Mucosa of descending colon (tissue), 3 donors: ENCODE measurements at regions of chr2 and their contacts with region 1.

Region 1: GRCh38 chr2:70616168-70616694 is 62.6 kb upstream of the TGFA start:
- DNase-seq: peak in 2 of 3 donors; percentile 40 to 56
- ATAC-seq: peak; percentile 95
- H3K4me3 ChIP-seq: no peak overlapping the region
- H3K4me1 ChIP-seq: peaks cover 3% of the 10 kb centered on the region
- CTCF ChIP-seq: no peak

Region 2: DNA sequence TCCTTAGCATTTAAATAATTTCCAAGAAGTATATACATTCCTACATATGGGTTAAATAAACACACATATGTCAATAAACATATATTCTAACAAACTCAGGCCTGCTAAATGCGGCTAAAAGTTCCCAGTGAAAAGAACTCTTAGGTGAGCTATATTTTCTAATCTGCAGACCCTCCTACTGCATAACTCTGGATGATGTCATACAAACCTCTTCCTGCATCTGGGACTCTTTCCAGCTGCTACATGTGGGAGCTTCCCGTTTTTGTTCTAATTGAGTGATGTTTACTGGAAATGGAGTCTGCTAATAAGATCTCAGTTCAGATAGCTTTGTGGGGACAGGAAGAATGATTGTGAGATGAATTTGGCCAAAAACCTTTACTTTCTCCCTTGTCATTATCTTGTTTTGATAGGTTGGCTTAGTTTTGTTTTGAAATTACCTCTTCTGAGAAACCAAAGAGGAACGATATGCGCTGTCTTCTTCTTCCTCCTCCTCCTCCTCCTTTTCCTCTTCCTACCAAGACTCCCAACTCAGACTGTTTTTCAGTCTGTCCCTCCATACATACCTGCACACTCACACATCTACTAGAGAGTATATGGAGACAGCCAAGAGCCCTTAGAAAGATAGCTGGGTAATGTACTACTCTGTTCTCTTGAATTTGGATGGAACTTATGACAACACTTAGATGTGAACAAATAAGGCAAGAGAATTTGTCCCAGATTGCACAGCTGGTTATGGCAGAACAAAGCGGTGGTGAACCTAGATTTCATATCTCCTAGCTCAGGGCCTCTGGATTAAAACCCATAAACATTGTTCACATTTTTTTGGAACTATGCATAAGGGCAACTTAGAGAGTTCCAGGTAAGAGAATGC is 932.9 kb before region 1 on chr2:
- intact Hi-C with region 1: no loop called
- DNase-seq: no peak
- ATAC-seq: no peak
- H3K4me3 ChIP-seq: no peak overlapping the region
- H3K4me1 ChIP-seq: no peaks in the 10 kb centered on the region
- CTCF ChIP-seq: no peak

Region 3: GRCh38 chr2:70340921-70341765 is 275.1 kb before region 1 on chr2:
- intact Hi-C with region 1: loop called (anchors 2 to 5 kb)
- DNase-seq: peak in 1 of 3 donors; percentile 47
- ATAC-seq: peak; percentile 94
- H3K4me3 ChIP-seq: no peak overlapping the region
- H3K4me1 ChIP-seq: no peaks in the 10 kb centered on the region
- CTCF ChIP-seq: peak; percentile 66

Region 4: DNA sequence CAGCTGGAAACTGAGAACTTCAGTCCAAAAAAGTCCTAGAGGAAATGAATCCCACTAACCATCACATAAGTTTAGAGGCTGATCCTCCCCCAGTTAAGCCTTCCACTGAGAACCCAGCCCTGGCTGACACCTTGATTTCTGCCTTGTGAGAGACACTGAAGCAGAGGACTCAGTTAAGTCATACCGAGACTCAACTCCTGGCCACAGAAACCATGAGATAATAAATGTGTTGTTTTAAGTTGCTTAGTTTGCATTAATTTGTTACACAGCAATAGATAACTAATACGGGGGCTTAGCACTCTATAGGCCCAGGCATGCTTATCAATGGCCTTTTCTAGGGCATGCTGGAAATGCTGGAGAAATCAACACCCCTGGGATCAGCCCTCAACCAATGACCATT is 155.2 kb after region 1 on chr2:
- intact Hi-C with region 1: no loop called
- DNase-seq: no peak
- ATAC-seq: no peak
- H3K4me3 ChIP-seq: no peak overlapping the region
- H3K4me1 ChIP-seq: peaks cover 11% of the 10 kb centered on the region
- CTCF ChIP-seq: no peak

Region 5: DNA sequence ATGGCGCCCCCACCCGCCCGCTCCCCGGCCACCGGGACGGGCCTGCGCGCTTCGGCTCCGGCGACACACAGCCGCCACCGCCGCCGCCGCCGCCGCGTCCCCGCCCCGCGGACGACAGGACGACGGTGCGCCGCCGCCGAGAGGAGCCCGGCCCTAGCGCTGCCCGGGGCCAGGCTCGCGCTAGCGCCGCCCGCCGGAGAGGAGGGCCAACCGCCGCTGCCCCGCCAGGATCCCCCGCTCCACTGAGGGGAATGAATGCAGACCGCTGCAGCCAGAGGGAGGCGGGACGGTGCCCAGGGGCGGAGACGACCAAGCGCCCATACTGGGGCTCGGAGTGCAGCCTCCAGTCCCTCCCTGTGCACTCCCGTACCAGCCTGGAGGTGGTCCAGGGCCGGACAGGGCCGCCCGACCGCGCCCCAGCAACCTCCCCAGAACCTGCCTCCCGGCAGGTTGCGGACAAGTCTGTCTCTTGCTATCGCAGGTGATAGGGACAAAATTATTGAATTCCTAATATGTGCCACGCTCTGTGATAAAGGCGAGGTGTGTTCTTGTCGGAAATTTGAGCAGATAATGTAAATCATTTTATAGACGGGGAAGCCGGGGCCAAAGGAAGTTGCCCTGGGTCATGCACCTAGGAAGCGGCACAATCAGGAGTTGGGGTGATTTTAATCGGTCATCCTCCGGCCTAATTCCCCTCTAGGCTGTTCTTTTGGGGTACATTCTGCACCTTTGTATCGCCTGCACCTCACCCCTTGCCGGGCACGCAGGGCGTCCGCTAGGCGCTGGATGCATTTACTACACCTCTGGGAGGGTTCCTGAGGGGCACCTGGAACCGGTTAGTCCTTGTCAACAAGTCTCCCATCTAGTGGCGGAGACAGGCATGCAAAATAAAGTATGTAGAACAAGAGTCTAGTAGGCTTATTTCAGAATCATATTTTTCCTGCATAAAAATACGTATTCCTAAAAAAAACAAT is 378.8 kb after region 1 on chr2 and contains the start of gene TEX261:
- intact Hi-C with region 1: no loop called
- DNase-seq: peak; percentile 89 to 94 (median 93)
- ATAC-seq: peak; percentile 99
- H3K4me3 ChIP-seq: peak within 1 kb of the TSS; percentile 98
- H3K4me1 ChIP-seq: peaks cover 21% of the 10 kb centered on the region
- CTCF ChIP-seq: peak; percentile 83
- total RNA-seq, gene TEX261: 51.0 to 63.0 (median 51.4) TPM